ENCODE measurements at regions of chr17 and their contacts with region 1.

Region 1: GRCh38 chr17:47615766-47616424 is 33.8 kb upstream of the KPNB1 start:
- DNase-seq: peak; percentile 24
- H3K4me3 ChIP-seq: no peak overlapping the region
- H3K27ac ChIP-seq: no peak overlapping the region
- H3K4me1 ChIP-seq: peaks cover 14% of the 10 kb centered on the region
- H3K27me3 ChIP-seq: no peaks in the 10 kb centered on the region
- CTCF ChIP-seq: peak; percentile 56

Region 2: DNA sequence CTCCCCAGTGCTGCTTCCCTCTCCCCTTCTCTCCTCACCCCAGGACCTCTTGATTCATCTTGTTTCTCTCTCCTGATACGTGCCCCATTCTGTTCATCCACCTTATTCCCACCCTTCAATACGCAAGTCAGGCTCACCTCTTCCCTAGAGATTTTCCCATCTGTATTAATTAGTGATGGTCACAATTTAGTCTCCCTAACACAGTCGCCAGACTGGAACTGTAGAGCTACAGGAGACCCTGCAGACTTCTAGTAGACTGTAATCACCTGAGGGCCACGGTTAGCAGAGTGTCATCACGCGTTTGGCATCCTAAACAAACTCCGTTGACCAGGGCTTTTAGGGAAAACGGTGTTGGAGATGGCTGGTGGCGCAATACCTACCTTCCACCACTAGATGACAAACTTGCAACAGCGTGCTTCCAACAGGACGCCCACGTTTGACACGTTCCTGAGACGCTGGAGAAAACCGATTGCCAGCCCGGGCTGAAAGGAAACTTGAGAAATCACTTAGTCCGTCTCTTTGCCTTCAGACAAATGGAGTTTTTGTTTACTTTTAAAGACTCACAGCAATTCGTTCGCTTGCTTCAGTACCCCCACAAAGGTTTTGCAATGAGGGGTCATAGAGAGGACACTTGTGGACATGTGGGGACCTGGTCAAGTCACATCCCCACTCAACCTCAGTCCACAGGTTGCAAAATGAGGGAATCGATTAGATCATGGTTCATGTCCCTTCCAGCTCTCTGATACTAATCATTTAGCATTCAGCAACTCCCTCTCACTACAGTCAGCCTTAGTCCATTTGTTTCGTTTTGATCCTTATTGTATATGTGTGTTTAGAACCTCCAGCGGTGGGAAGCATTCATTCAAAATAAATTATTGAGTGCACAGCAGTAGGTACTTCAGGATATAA is 386.1 kb before region 1 on chr17:
- CTCF ChIA-PET with region 1: no interaction called
- dilution Hi-C with region 1: no loop called
- in situ Hi-C with region 1: loop called in 1 of 2 experiments (anchors 25 kb)
- intact Hi-C with region 1: loop called (anchors 5 kb)
- DNase-seq: peak; percentile 89
- H3K4me3 ChIP-seq: peak overlapping the region; percentile 2 to 19 (median 13)
- H3K27ac ChIP-seq: no peak overlapping the region
- H3K4me1 ChIP-seq: peaks cover 21% of the 10 kb centered on the region
- H3K27me3 ChIP-seq: no peaks in the 10 kb centered on the region
- CTCF ChIP-seq: peak; percentile 100

Region 3: GRCh38 chr17:47363171-47363570 is 252.7 kb before region 1 on chr17:
- CTCF ChIA-PET with region 1: no interaction called
- dilution Hi-C with region 1: no loop called
- in situ Hi-C with region 1: loop called in 1 of 2 experiments (anchors 25 kb)
- intact Hi-C with region 1: loop called (anchors 2 kb)
- DNase-seq: peak; percentile 12
- H3K4me3 ChIP-seq: no peak overlapping the region
- H3K27ac ChIP-seq: no peak overlapping the region
- H3K4me1 ChIP-seq: no peaks in the 10 kb centered on the region
- H3K27me3 ChIP-seq: peaks cover 2% of the 10 kb centered on the region
- CTCF ChIP-seq: no peak

Region 4: GRCh38 chr17:47368262-47368661 is 247.6 kb before region 1 on chr17:
- CTCF ChIA-PET with region 1: no interaction called
- dilution Hi-C with region 1: no loop called
- in situ Hi-C with region 1: loop called in 1 of 2 experiments (anchors 25 kb)
- intact Hi-C with region 1: loop called (anchors 2 kb)
- DNase-seq: no peak
- H3K4me3 ChIP-seq: no peak overlapping the region
- H3K27ac ChIP-seq: no peak overlapping the region
- H3K4me1 ChIP-seq: no peaks in the 10 kb centered on the region
- H3K27me3 ChIP-seq: peaks cover 2% of the 10 kb centered on the region
- CTCF ChIP-seq: no peak

Region 5: GRCh38 chr17:47641202-47641601 is 25.3 kb after region 1 on chr17:
- CTCF ChIA-PET with region 1: no interaction called
- dilution Hi-C with region 1: no loop called
- in situ Hi-C with region 1: no loop called
- intact Hi-C with region 1: no loop called
- DNase-seq: no peak
- H3K4me3 ChIP-seq: no peak overlapping the region
- H3K27ac ChIP-seq: no peak overlapping the region
- H3K4me1 ChIP-seq: no peaks in the 10 kb centered on the region
- H3K27me3 ChIP-seq: no peaks in the 10 kb centered on the region
- CTCF ChIP-seq: no peak

Region 6: DNA sequence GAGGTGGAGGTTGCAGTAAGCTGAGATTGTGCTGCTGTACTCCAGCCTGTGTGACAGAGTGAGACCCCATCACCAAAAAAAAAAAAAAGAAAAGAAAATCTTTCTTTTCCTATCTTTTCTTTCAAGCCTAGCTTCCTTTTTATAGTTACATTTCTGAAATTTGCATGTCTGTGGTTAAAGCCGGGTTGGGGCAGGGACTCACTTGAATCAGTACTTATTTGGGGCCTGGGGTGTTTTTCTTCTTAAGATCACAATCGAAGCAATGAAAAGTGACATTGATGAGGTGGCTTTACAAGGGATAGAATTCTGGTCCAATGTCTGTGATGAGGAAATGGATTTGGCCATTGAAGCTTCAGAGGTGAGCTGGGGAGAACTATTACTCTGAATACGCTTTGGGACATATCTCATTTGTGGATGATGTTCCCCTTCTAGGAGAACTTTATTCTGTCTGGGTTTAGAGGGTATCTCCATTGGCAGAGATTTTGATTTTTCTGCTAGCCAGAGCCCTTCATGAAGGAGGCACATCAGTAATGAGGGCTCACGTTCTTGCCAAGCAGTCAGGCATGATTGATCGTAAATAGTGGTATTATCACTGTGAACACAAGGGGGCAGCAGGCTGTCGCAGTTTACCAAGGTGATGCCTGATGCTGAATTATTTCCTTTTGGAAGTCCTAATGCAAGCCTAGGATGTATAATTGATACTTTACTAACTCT is 48.2 kb after region 1 on chr17:
- CTCF ChIA-PET with region 1: no interaction called
- dilution Hi-C with region 1: no loop called
- in situ Hi-C with region 1: no loop called
- intact Hi-C with region 1: no loop called
- DNase-seq: peak; percentile 34
- H3K4me3 ChIP-seq: no peak overlapping the region
- H3K27ac ChIP-seq: no peak overlapping the region
- H3K4me1 ChIP-seq: no peaks in the 10 kb centered on the region
- H3K27me3 ChIP-seq: no peaks in the 10 kb centered on the region
- CTCF ChIP-seq: peak; percentile 71 to 80

Measured in mammary epithelial cell (primary cell).